Heart right ventricle (tissue), 16 donors: ENCODE measurements at regions of chr2 and their contacts with region 1.

Region 1: DNA sequence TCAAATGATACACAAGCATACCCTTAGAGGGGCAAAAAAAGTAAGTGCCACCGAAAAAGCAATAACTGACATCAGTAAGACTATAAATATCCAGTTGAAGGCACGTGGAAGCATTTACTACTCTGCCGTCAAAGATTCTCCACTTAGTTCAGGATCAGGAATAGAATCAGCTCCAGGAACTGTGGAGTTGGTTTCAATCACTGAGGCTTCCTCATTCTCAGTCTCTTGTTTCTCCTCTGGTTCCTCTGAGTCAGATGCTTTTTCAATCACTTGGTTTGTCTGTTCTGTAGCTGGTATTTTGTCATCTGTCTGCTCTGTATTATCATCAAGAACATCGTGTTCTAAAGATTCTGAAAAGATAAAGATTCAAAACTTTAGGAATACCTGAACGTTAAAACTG is 72.2 kb downstream of the LNPK start:
- DNase-seq: no peak
- ATAC-seq: peak in 6 of 8 donors; percentile 38 to 92 (median 58)
- H3K4me3 ChIP-seq: no peak overlapping the region
- H3K27ac ChIP-seq: peak overlapping the region in 4 of 10 donors; percentile 13 to 44 (median 26)
- H3K4me1 ChIP-seq: peaks cover 0 to 10% (median 0%) of the 10 kb centered on the region in 9 donors
- H3K27me3 ChIP-seq: no peaks in the 10 kb centered on the region
- CTCF ChIP-seq: no peak

Region 2: GRCh38 chr2:175786471-175787124 is 143.3 kb before region 1 on chr2:
- intact Hi-C with region 1: loop called in 1 of 10 experiments (anchors 10 kb)
- DNase-seq: no peak
- ATAC-seq: no peak
- H3K4me3 ChIP-seq: no peak overlapping the region
- H3K27ac ChIP-seq: no peak overlapping the region
- H3K4me1 ChIP-seq: peaks cover 0 to 11% (median 0%) of the 10 kb centered on the region in 9 donors
- H3K27me3 ChIP-seq: no peaks in the 10 kb centered on the region
- CTCF ChIP-seq: no peak